Heart left ventricle (tissue), 16 donors: ENCODE measurements at regions of chr5 and their contacts with region 1.

Region 1: GRCh38 chr5:31935702-31936369 is 238.3 kb downstream of the GOLPH3 start:
- DNase-seq: no peak
- ATAC-seq: peak; percentile 43 to 58 (median 55)
- H3K4me3 ChIP-seq: peak overlapping the region in 2 of 12 donors; percentile 18 to 30
- H3K27ac ChIP-seq: peak overlapping the region in 2 of 12 donors; percentile 4 to 26
- H3K4me1 ChIP-seq: peaks cover 4 to 33% (median 15%) of the 10 kb centered on the region in 12 donors
- H3K27me3 ChIP-seq: no peaks in the 10 kb centered on the region
- CTCF ChIP-seq: no peak
- POLR2A ChIP-seq: no peak

Region 2: DNA sequence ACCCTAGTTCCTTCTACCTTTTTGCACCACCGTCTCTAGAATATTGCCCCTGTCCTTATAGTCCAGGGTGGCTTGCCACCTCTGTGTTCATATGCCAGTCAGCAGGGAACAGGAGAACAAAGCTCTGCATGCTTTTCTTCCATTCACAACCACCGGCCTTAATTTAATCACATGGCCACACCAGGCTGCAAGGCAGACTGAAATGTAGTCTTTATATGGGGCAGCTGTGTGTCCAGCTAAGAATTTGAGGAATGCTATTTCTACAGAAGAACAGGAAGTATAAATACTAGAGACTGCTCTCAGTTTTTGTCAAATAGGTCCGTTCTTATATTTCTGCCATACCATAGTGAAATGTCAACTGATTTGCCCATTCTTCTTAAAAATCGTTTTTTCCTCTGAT is 398.0 kb before region 1 on chr5:
- intact Hi-C with region 1: no loop called
- DNase-seq: no peak
- ATAC-seq: no peak
- H3K4me3 ChIP-seq: no peak overlapping the region
- H3K27ac ChIP-seq: no peak overlapping the region
- H3K4me1 ChIP-seq: peaks cover 0 to 14% (median 10%) of the 10 kb centered on the region in 12 donors
- H3K27me3 ChIP-seq: no peaks in the 10 kb centered on the region
- CTCF ChIP-seq: no peak
- POLR2A ChIP-seq: no peak

Region 3: DNA sequence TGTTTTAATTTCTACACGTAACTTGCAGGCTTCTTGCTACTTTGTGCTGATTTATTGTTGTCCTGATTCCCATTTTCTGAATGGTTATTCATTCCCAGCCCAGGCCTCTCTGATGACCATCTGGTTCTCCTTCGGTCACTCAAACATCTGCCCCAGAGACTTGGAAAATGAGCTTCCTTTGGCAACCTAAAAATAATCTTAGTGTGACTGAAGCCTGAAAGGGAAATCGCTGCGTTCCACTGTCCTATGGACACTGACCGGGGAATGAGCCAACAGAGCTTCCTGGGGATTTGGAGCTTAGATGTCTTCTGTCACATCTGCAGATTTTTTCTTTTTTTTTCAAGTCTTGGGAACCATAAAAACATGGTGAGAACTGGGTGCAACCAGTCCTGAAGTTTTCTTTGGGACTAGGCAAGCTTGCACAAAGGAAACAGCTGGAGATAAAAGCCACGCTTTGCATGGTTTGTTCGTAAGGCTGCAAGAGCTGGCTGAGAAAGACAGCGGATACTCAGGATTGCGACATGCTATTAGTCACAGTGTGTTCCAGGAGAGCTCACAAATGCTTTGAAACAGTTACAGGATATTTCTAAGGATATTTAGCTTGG is 92.0 kb after region 1 on chr5:
- intact Hi-C with region 1: loop called in 1 of 10 experiments (anchors 5 kb)
- DNase-seq: peak in 4 of 5 donors; percentile 74 to 82 (median 79)
- ATAC-seq: peak; percentile 84 to 96 (median 92)
- H3K4me3 ChIP-seq: peak overlapping the region in 6 of 12 donors; percentile 8 to 23 (median 14)
- H3K27ac ChIP-seq: peak overlapping the region; percentile 66 to 87 (median 79)
- H3K4me1 ChIP-seq: peaks cover 19 to 71% (median 57%) of the 10 kb centered on the region in 12 donors
- H3K27me3 ChIP-seq: no peaks in the 10 kb centered on the region
- CTCF ChIP-seq: no peak
- POLR2A ChIP-seq: no peak

Region 4: DNA sequence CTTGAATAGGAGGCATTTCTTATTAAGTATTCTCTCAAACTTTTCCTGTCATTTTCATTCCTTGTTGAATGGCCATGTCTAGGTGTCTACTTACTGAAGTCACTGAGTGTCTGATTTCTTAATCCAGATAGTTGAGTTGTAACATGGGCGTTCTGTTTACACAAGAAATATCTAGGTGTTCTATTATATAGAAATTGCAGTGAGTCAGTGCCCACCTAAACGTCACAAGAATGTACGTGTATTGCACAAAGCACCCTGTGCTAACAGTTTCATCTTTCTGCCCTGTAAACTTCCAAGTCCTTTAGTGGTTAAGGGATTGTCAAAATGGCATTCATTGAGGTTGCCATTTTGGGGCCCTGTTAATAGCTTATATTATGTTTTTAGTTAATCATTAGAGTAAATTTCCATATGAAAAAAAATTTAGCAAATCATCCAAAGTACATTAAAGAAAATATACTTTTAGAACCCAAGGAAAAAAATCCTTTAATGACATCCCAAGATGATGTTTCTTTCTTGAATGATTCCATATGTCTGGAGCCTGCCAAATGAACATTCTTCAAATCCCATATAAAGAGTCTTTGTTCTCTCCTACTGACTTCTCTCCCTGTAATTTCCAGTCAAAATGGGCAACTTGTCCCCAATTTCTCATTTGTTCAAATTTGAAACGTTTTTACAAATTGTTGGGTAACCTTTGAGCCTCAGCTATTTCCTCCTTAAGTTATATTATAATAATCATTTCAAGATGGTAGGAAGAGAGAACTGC is 124.1 kb after region 1 on chr5:
- intact Hi-C with region 1: loop called in 2 of 10 experiments (anchors 5 to 10 kb)
- DNase-seq: no peak
- ATAC-seq: no peak
- H3K4me3 ChIP-seq: no peak overlapping the region
- H3K27ac ChIP-seq: no peak overlapping the region
- H3K4me1 ChIP-seq: peaks cover 7 to 26% (median 19%) of the 10 kb centered on the region in 12 donors
- H3K27me3 ChIP-seq: no peaks in the 10 kb centered on the region
- CTCF ChIP-seq: no peak
- POLR2A ChIP-seq: no peak

Region 5: DNA sequence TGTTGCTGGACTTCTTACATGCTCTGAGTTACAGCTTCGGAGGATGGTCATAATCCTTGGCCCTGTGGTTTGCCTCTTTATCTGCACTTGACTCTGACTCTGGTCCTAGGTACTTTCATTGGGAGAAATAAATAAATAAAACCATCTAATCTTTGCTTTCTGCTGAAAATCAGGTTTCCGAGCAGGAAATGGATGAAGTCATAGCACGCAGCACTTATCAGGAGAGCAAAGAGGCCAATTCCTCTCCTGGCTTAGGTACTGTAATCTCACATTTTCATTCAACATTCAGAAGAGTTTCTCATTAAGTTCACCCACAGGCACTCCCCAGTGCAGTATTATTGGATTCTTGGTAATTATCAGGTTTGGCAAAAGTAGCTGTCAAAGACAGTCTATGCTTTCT is 133.6 kb after region 1 on chr5:
- intact Hi-C with region 1: loop called in 3 of 10 experiments (anchors 5 to 10 kb)
- DNase-seq: no peak
- ATAC-seq: no peak
- H3K4me3 ChIP-seq: no peak overlapping the region
- H3K27ac ChIP-seq: no peak overlapping the region
- H3K4me1 ChIP-seq: peaks cover 0 to 16% (median 0%) of the 10 kb centered on the region in 12 donors
- H3K27me3 ChIP-seq: no peaks in the 10 kb centered on the region
- CTCF ChIP-seq: no peak
- POLR2A ChIP-seq: no peak